B cell (primary cell): ENCODE measurements at regions of chr12 and their contacts with region 1.

Region 1: GRCh38 chr12:47651368-47652254 is 54.2 kb downstream of the RPAP3 start:
- DNase-seq: peak; percentile 66
- ATAC-seq: peak; percentile 83
- H3K4me3 ChIP-seq: no peak overlapping the region
- H3K4me3 Mint-ChIP-seq: no peak overlapping the region
- H3K27ac ChIP-seq: no peak overlapping the region
- H3K27ac Mint-ChIP-seq: no peak overlapping the region
- H3K4me1 ChIP-seq: peaks cover 0 to 12% of the 10 kb centered on the region in 2 donors
- H3K4me1 Mint-ChIP-seq: peaks cover 13% of the 10 kb centered on the region
- H3K27me3 ChIP-seq: no peaks in the 10 kb centered on the region
- H3K27me3 Mint-ChIP-seq: no peaks in the 10 kb centered on the region
- CTCF ChIP-seq: peak; percentile 82

Region 2: GRCh38 chr12:47686645-47687240 is 35.1 kb after region 1 on chr12:
- CTCF ChIA-PET with region 1: interaction called, 5 read pairs
- POLR2A ChIA-PET with region 1: no interaction called
- intact Hi-C with region 1: loop called (anchors 1 kb)
- DNase-seq: peak; percentile 39
- ATAC-seq: no peak
- H3K4me3 ChIP-seq: no peak overlapping the region
- H3K4me3 Mint-ChIP-seq: no peak overlapping the region
- H3K27ac ChIP-seq: no peak overlapping the region
- H3K27ac Mint-ChIP-seq: no peak overlapping the region
- H3K4me1 ChIP-seq: no peaks in the 10 kb centered on the region
- H3K4me1 Mint-ChIP-seq: peaks cover 4% of the 10 kb centered on the region
- H3K27me3 ChIP-seq: no peaks in the 10 kb centered on the region
- H3K27me3 Mint-ChIP-seq: no peaks in the 10 kb centered on the region
- CTCF ChIP-seq: peak; percentile 72

Region 3: DNA sequence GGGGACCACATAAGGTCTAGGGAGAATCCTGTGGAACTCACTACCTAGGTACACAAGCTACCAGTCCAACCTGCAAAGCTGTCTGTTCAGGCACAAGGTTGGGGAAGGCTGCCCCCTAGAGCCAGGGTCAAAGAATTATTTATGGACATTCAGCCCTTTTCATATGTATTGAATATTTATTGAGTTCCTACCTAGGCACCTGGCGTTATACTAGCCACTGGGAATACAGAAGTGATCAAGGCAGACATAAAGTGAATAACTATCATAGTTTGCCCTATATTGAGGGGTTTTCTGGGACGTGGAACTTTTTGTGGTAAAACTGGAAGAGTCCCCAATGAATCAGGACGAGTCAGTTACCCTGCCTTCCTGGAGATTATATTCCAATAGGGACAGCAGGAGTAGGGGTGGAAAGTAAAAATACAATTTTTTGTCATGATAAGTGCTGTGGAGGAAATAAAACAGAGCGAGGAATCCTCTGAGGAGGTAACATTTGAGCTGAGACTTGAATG is 115.7 kb after region 1 on chr12:
- CTCF ChIA-PET with region 1: interaction called, 11 read pairs
- POLR2A ChIA-PET with region 1: no interaction called
- intact Hi-C with region 1: no loop called
- DNase-seq: peak; percentile 78
- ATAC-seq: peak; percentile 74
- H3K4me3 ChIP-seq: no peak overlapping the region
- H3K4me3 Mint-ChIP-seq: no peak overlapping the region
- H3K27ac ChIP-seq: no peak overlapping the region
- H3K27ac Mint-ChIP-seq: no peak overlapping the region
- H3K4me1 ChIP-seq: peaks cover 5 to 15% of the 10 kb centered on the region in 2 donors
- H3K4me1 Mint-ChIP-seq: peaks cover 9% of the 10 kb centered on the region
- H3K27me3 ChIP-seq: no peaks in the 10 kb centered on the region
- H3K27me3 Mint-ChIP-seq: peaks cover 4% of the 10 kb centered on the region
- CTCF ChIP-seq: peak; percentile 80

Region 4: DNA sequence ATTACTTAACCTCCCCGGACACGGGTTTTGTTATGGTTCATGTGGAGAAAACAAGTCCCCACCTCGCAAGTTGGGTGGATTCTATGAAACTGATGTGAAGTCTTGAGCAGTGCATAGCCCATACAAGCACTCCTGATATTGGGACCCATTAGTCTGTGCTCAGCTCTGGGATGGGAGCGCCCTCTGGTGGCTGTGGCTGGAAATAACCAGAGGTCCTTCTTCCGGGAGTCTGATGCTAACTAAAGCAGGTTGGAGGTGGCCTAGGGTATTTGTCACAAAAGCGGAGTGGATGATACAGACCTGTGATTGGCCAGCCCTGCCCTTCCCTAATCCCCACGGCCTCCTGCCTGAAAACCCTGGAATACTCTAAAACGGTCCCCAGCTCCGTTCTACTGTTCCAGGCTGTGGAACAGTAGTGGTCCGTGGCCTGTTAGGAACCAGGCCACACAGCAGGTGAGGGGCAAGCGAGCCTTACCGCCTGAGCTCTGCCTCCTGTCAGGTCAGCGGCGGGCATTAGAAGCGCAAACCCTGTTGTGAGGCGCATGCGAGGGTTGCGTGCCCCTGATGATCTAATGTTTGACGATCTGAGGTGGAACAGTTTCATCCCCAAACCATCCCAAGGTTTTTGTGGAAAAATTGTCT is 127.8 kb after region 1 on chr12:
- CTCF ChIA-PET with region 1: interaction called, 23 read pairs
- POLR2A ChIA-PET with region 1: no interaction called
- intact Hi-C with region 1: loop called (anchors 1 kb)
- DNase-seq: peak; percentile 90
- ATAC-seq: peak; percentile 90
- H3K4me3 ChIP-seq: no peak overlapping the region
- H3K4me3 Mint-ChIP-seq: no peak overlapping the region
- H3K27ac ChIP-seq: no peak overlapping the region
- H3K27ac Mint-ChIP-seq: peak overlapping the region; percentile 80
- H3K4me1 ChIP-seq: peaks cover 0 to 14% of the 10 kb centered on the region in 2 donors
- H3K4me1 Mint-ChIP-seq: peaks cover 23% of the 10 kb centered on the region
- H3K27me3 ChIP-seq: no peaks in the 10 kb centered on the region
- H3K27me3 Mint-ChIP-seq: no peaks in the 10 kb centered on the region
- CTCF ChIP-seq: peak; percentile 92

Region 5: DNA sequence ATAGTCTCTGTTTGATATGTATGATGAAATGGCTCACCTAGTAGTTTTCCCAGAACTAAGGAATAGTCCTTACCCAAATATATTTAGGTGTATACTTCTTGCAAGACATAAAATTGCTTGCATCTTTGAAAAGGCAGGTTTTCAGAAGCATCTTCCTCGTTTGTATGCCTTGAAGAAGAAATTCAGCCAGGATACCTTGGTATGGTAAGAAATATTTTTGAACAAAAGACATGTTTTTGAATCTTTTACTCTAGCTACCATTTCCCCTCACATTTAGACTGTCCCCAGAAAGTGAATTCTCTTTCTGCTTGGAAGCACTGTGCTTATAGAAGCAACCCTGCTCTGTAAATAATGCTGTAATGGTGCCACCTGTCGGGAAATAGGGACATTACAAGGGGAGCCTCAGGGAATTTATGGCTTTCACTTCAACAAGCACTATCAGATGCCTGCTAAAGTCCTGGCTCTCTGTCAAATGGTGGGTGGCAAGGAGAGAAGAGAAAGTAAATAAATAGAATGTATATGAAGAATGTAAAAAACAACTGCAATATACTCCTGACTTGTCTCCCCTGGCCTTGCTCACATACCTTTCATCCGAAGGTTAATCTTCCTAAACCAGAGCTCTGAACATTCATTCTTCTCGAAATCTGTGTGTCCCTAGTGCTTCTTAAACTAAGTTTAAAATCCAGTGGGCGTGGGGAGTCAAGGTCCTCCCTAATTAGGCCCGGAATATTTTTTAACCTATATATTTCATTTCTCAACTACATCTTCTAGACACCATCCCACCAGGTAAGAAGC is 537.9 kb after region 1 on chr12:
- CTCF ChIA-PET with region 1: no interaction called
- POLR2A ChIA-PET with region 1: no interaction called
- intact Hi-C with region 1: loop called (anchors 5 kb)
- DNase-seq: peak; percentile 81
- ATAC-seq: peak; percentile 88
- H3K4me3 ChIP-seq: no peak overlapping the region
- H3K4me3 Mint-ChIP-seq: no peak overlapping the region
- H3K27ac ChIP-seq: no peak overlapping the region
- H3K27ac Mint-ChIP-seq: no peak overlapping the region
- H3K4me1 ChIP-seq: peaks cover 12% of the 10 kb centered on the region in 2 donors
- H3K4me1 Mint-ChIP-seq: peaks cover 11% of the 10 kb centered on the region
- H3K27me3 ChIP-seq: peaks cover 0 to 15% (median 5%) of the 10 kb centered on the region in 4 experiments
- H3K27me3 Mint-ChIP-seq: peaks cover 21% of the 10 kb centered on the region
- CTCF ChIP-seq: peak; percentile 93